H1 (cell line): ENCODE measurements at regions of chr3 and their contacts with region 1.

Region 1: GRCh38 chr3:31836131-31837075 is 144.7 kb downstream of the OSBPL10 start:
- DNase-seq: no peak
- H3K4me3 ChIP-seq: no peak overlapping the region
- H3K27ac ChIP-seq: no peak overlapping the region
- H3K4me1 ChIP-seq: peaks cover 0 to 15% (median 3%) of the 10 kb centered on the region in 4 experiments; a peak in 5 of 7 replicates
- H3K27me3 ChIP-seq: no peaks in the 10 kb centered on the region
- CTCF ChIP-seq: no peak
- EP300 ChIP-seq: no peak
- POLR2A ChIP-seq: no peak
- RAD21 ChIP-seq: no peak

Region 2: DNA sequence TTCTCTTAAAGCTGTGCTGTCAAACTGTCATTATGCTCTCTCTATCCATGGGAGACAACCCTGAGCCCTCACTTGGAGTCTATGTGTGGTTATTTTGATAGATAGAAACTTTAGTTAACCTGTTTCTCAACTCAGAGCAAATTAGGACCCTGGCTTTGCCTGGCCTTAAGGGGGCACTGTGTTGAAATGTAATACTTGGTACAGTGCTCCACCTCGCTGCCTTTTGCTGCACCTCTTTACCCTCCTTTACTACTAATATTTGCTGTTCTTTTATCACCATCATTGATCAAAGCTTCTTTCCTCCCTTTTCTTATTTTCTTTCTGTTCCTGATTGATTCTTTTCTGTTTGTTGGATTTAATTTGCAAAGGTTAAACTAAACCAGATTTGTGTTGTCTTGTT is 269.4 kb before region 1 on chr3:
- CTCF ChIA-PET with region 1: no interaction called
- POLR2A ChIA-PET with region 1: no interaction called
- DNase-seq: no peak
- H3K4me3 ChIP-seq: no peak overlapping the region
- H3K27ac ChIP-seq: no peak overlapping the region
- H3K4me1 ChIP-seq: peaks cover 5 to 11% (median 7%) of the 10 kb centered on the region in 4 experiments
- H3K27me3 ChIP-seq: no peaks in the 10 kb centered on the region
- CTCF ChIP-seq: peak; percentile 35 to 97 (median 81)
- EP300 ChIP-seq: no peak
- POLR2A ChIP-seq: no peak
- RAD21 ChIP-seq: peak; percentile 47; a peak in 3 of 4 replicates

Region 3: DNA sequence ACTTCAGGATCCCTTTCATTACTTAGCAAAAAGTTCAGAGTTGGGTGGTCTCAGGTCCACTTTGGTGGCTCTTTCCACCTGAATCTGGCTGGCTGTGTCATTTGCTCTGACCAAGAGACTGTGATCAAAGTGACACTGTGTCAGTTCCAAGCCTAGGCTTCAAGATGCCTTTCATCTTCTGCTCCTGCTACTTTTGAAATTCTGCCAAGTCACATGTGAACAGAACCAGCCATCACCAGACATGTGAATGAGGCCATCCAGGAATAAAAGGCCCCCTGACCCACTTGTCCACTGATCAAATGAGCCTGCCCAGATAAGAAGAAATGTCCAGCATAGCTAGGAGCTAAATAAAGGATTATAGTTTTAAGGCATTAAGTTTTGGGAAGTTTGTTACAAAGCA is 12.5 kb after region 1 on chr3:
- CTCF ChIA-PET with region 1: interaction called, 15 read pairs
- POLR2A ChIA-PET with region 1: interaction called, 3 read pairs
- DNase-seq: no peak
- H3K4me3 ChIP-seq: no peak overlapping the region
- H3K27ac ChIP-seq: no peak overlapping the region
- H3K4me1 ChIP-seq: peaks cover 0 to 8% (median 2%) of the 10 kb centered on the region in 4 experiments; a peak in 3 of 7 replicates
- H3K27me3 ChIP-seq: no peaks in the 10 kb centered on the region
- CTCF ChIP-seq: no peak
- EP300 ChIP-seq: no peak
- POLR2A ChIP-seq: no peak
- RAD21 ChIP-seq: no peak

Region 4: DNA sequence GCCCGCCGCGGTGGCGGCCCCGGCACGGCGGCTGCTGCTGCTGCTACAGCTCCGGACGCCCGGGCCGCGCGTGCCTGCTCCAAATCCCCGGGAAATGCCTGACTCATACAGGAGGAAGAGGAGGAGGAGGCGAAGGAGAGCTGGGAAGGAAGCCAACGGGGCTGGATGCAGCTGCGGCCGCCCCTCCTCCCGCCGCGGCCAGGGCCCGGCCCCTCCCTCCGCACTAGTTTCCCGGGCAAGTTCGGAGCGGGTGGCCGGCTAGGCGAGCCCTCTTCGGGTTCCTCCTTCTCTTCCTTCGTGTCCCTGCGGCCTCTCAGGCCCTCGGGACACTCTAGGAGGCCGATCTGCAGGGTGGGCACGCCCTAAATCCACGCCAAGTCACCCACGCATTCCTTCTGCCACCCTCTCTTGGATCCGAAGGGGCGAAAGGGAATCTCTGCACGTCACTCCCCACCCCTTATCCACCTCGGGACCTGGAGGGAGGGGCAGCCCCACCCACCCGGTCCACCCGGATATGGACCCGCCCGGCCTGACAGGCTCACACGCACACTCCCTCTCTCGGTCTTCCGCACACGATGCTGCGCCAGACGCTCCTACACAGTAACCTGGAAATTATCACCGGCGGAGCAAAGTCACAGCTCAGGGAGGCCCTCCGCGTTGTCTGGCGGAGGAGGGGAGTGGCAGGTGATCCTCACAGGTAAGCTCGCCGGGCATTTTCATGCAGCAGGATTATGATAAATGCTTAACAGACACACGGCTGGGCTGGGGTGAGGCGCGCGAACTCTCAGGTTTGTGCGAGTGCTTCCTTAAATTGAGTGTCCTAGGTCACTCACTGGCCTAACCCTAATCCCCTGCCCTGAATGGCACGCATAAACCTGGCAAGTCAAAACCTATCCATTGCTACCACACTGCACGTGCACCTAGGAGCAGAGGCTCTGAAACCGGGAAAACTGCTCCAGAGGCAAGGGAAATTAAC is 145.1 kb after region 1 on chr3 and contains the starts of genes OSBPL10 and ZNF860:
- CTCF ChIA-PET with region 1: no interaction called
- POLR2A ChIA-PET with region 1: no interaction called
- DNase-seq: peak in 1 of 2 experiments; percentile 87
- H3K4me3 ChIP-seq: peak within 1 kb of the TSS; percentile 71 to 96 (median 88)
- H3K27ac ChIP-seq: peak within 1 kb of the TSS; percentile 81
- H3K4me1 ChIP-seq: peaks cover 0 to 7% (median 4%) of the 10 kb centered on the region in 4 experiments; a peak in 3 of 7 replicates
- H3K27me3 ChIP-seq: no peaks in the 10 kb centered on the region; a peak in 1 of 7 replicates
- CTCF ChIP-seq: no peak
- EP300 ChIP-seq: no peak
- POLR2A ChIP-seq: no peak; a peak in 2 of 3 replicates
- RAD21 ChIP-seq: peak in 1 of 2 experiments; percentile 19; a peak in 1 of 4 replicates
- total RNA-seq, gene OSBPL10: 86.7 and 88.8 TPM in 2 replicates
- total RNA-seq, gene ZNF860: 8.6 and 9.8 TPM in 2 replicates